PC-9 (cell line): ENCODE measurements at regions of chr7 and their contacts with region 1.

Region 1: DNA sequence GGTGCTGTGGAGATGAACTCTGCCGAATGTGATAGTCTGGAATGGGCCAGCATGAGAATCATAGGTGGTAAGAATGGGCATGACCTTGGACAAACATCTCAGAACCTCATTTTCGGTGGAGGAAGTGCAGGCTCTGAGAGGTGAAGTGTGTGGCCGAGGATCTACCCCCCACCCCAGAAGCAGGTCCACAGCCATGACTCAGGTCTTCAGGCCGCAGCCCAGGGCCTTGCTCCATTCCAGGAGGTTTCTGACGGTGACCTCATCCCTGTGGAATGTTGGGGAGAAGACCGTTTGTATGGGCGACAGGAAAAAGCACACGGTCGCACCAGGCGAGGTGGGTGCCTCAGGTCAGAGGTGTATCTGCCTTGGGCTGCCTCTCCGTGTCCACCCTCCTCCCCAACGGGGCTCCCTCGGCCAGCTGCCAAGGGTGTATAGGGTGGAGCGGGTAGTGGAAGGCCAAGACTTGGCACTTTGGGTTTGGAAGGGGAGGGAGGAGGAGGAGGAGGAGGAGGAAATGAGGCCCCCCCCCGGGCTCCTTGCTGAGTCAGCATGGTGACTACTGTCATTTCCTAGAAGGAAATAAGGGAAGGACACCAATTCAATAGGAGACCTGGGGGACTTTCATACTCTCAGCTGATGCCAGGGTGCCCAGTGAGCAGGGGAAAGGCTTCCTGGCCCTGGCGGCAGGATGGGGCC is 168.0 kb upstream of the RHEB start:
- DNase-seq: peak; percentile 99 to 100
- H3K4me3 ChIP-seq: no peak overlapping the region
- H3K27ac ChIP-seq: peak overlapping the region; percentile 84
- H3K4me1 ChIP-seq: peaks cover 53% of the 10 kb centered on the region
- H3K27me3 ChIP-seq: no peaks in the 10 kb centered on the region
- CTCF ChIP-seq: no peak

Region 2: DNA sequence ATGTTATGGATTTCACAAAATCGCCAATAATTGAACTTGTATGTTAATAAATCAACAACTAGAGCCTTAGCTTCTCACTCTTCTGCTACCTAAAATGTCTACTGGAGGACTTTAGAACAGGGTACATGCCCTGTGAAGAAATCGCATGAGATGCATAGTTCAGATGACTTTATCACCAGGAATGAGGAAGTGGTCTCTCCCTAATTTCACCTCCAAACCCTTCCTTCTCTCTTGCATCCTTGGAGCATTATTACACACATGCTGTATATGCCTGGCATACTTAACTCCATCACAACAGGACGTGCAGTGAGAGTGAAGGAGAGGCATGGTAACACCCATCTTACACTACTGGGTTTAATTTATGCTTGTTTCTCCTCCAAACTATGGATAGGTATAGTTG is 195.8 kb before region 1 on chr7:
- CTCF ChIA-PET with region 1: no interaction called
- POLR2A ChIA-PET with region 1: no interaction called
- intact Hi-C with region 1: loop called (anchors 5 kb)
- DNase-seq: peak; percentile 58 to 99
- H3K4me3 ChIP-seq: no peak overlapping the region; the same call in 1 of the 2 replicates
- H3K27ac ChIP-seq: peak overlapping the region; percentile 86
- H3K4me1 ChIP-seq: peaks cover 65% of the 10 kb centered on the region
- H3K27me3 ChIP-seq: no peaks in the 10 kb centered on the region
- CTCF ChIP-seq: no peak

Region 3: GRCh38 chr7:151592868-151593486 is 94.7 kb before region 1 on chr7:
- CTCF ChIA-PET with region 1: no interaction called
- POLR2A ChIA-PET with region 1: no interaction called
- intact Hi-C with region 1: loop called (anchors 1 kb)
- DNase-seq: peak; percentile 31 to 90
- H3K4me3 ChIP-seq: no peak overlapping the region
- H3K27ac ChIP-seq: peak overlapping the region; percentile 54
- H3K4me1 ChIP-seq: peaks cover 44% of the 10 kb centered on the region
- H3K27me3 ChIP-seq: no peaks in the 10 kb centered on the region
- CTCF ChIP-seq: no peak

Region 4: GRCh38 chr7:151657173-151657572 is 30.5 kb before region 1 on chr7:
- CTCF ChIA-PET with region 1: no interaction called
- POLR2A ChIA-PET with region 1: interaction called, 11 read pairs
- intact Hi-C with region 1: no loop called
- DNase-seq: no peak
- H3K4me3 ChIP-seq: no peak overlapping the region
- H3K27ac ChIP-seq: no peak overlapping the region
- H3K4me1 ChIP-seq: no peaks in the 10 kb centered on the region
- H3K27me3 ChIP-seq: no peaks in the 10 kb centered on the region
- CTCF ChIP-seq: no peak

Region 5: DNA sequence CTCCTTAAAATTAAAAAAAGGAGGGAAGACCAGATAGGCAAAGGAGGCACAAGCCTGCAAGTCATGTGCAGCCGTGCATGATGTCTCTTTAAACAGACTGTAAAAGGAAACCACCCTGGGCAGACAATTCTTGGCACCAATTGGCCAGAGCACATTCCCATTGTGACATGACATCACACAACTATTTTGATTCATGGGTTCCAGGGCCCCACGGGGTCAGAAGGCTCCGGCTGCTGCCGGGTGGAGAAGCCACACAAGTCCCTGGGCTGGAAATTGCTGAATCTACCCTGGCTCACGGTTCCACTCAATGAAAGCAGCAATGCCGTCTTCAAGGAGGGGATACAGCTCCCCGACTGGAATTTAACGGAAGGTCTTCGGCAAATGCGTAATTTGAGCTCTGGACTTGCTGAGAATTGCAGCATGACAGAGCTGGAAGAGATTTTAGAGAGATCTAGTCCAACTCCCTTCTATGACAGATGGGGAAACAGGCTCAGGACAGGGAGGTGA is 48.8 kb after region 1 on chr7:
- CTCF ChIA-PET with region 1: no interaction called
- POLR2A ChIA-PET with region 1: interaction called, 5 read pairs
- intact Hi-C with region 1: loop called (anchors 2 kb)
- DNase-seq: peak; percentile 90 to 94
- H3K4me3 ChIP-seq: peak overlapping the region; percentile 26; the same call in 1 of the 2 replicates
- H3K27ac ChIP-seq: peak overlapping the region; percentile 81
- H3K4me1 ChIP-seq: peaks cover 29% of the 10 kb centered on the region
- H3K27me3 ChIP-seq: no peaks in the 10 kb centered on the region
- CTCF ChIP-seq: peak; percentile 58

Region 6: GRCh38 chr7:151754142-151754590 is 66.5 kb after region 1 on chr7:
- CTCF ChIA-PET with region 1: interaction called, 9 read pairs
- POLR2A ChIA-PET with region 1: interaction called, 7 read pairs
- intact Hi-C with region 1: loop called (anchors 1 kb)
- DNase-seq: peak; percentile 93 to 97
- H3K4me3 ChIP-seq: no peak overlapping the region
- H3K27ac ChIP-seq: no peak overlapping the region
- H3K4me1 ChIP-seq: peaks cover 15% of the 10 kb centered on the region
- H3K27me3 ChIP-seq: no peaks in the 10 kb centered on the region
- CTCF ChIP-seq: peak; percentile 99

Region 7: GRCh38 chr7:152025077-152025936 is 337.6 kb after region 1 on chr7 and contains the start of gene GALNT11:
- CTCF ChIA-PET with region 1: no interaction called
- POLR2A ChIA-PET with region 1: interaction called, 13 read pairs
- intact Hi-C with region 1: no loop called
- DNase-seq: peak; percentile 67 to 89
- H3K4me3 ChIP-seq: peak within 1 kb of the TSS; percentile 78
- H3K27ac ChIP-seq: no peak within 1 kb of the TSS
- H3K4me1 ChIP-seq: peaks cover 16% of the 10 kb centered on the region
- H3K27me3 ChIP-seq: no peaks in the 10 kb centered on the region
- CTCF ChIP-seq: peak; percentile 36; the same call in 1 of the 2 replicates
- total RNA-seq, gene GALNT11: 26.3 and 28.8 TPM in 2 replicates